ENCODE measurements at regions of chr3 and their contacts with region 1.

Region 1: GRCh38 chr3:23916886-23917678 is at the starts of genes NKIRAS1 and RPL15:
- DNase-seq: peak; percentile 92

Region 2: GRCh38 chr3:23836536-23837230 is 80.4 kb before region 1 on chr3:
- CTCF ChIA-PET with region 1: no interaction called
- POLR2A ChIA-PET with region 1: interaction called, 18 read pairs
- DNase-seq: no peak

Region 3: DNA sequence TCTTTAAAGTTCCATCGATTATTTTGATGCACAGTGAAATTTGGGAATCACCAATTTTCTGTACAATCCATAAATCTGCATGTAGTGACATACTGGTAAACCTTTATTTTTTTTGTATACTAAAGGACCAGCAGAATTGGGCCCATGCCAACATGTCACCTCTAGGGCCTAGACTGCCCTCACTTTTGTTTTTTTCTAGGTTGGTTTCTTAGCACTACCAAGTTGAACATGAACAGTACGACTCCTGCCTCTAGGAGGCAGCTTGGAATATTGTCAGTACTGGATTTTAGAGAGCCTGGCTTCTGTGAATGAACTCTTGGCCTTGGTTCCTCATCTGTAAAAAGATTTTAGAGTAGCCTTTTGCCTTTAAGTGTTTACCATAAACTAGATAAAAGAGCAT is 32.6 kb before region 1 on chr3:
- CTCF ChIA-PET with region 1: interaction called, 3 read pairs
- POLR2A ChIA-PET with region 1: interaction called, 35 read pairs
- DNase-seq: peak; percentile 33

Region 4: GRCh38 chr3:23938688-23939087 is 21.6 kb after region 1 on chr3:
- CTCF ChIA-PET with region 1: no interaction called
- POLR2A ChIA-PET with region 1: interaction called, 62 read pairs
- DNase-seq: no peak

Region 5: DNA sequence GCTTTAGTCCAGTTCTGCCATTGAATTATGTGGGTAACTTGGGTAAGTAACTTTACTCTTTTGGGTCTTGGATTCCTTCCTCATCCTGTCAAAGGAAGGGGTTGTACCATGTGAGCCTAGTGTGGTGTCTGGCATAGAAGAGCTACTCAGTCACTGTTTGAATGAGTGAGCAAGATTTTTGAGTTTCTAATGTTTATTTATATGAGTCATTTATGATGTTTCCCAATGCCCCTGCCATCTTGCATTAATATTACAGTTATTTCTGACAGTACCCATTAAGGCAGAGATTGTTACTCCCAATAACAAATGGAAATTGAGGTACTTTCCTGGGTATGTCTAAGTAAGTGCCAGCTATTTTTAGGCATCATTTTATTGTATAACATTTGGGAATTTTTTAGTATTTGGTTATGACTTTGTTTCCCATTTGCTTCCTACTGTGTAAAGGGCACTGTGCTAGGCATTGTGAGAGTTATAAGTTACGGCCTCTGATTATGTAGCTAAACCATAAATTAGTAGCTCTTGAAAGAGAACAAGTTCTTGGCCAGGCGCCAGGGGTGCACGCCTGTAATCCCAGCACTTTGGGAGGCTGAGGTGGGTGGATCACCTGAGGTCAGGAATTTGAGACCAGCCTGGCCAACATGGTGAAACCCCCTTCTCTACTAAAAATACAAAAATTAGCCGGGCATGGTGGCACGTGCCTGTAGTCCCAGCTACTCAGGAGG is 51.5 kb after region 1 on chr3:
- CTCF ChIA-PET with region 1: interaction called, 3 read pairs
- POLR2A ChIA-PET with region 1: interaction called, 13 read pairs
- DNase-seq: no peak

Region 6: GRCh38 chr3:24177201-24177600 is 260.1 kb after region 1 on chr3:
- CTCF ChIA-PET with region 1: no interaction called
- POLR2A ChIA-PET with region 1: no interaction called
- DNase-seq: no peak